ENCODE measurements at regions of chr3 and their contacts with region 1.

Region 1: GRCh38 chr3:113696658-113697499 is 437 bp upstream of the USF3 start:
- DNase-seq: peak; percentile 99
- ATAC-seq: peak; percentile 82
- H3K4me3 ChIP-seq: peak overlapping the region; percentile 73
- H3K27ac ChIP-seq: no peak overlapping the region
- H3K4me1 ChIP-seq: peaks cover 14% of the 10 kb centered on the region
- H3K27me3 ChIP-seq: no peaks in the 10 kb centered on the region
- CTCF ChIP-seq: no peak

Region 2: GRCh38 chr3:113231827-113232253 is 465.0 kb before region 1 on chr3:
- CTCF ChIA-PET with region 1: no interaction called
- POLR2A ChIA-PET with region 1: no interaction called
- intact Hi-C with region 1: loop called (anchors 5 kb)
- DNase-seq: peak; percentile 95
- ATAC-seq: peak; percentile 99
- H3K4me3 ChIP-seq: no peak overlapping the region
- H3K27ac ChIP-seq: peak overlapping the region; percentile 93
- H3K4me1 ChIP-seq: peaks cover 26% of the 10 kb centered on the region
- H3K27me3 ChIP-seq: no peaks in the 10 kb centered on the region
- CTCF ChIP-seq: no peak

Region 3: GRCh38 chr3:113275929-113276750 is 420.7 kb before region 1 on chr3:
- CTCF ChIA-PET with region 1: no interaction called
- POLR2A ChIA-PET with region 1: no interaction called
- intact Hi-C with region 1: loop called (anchors 2 kb)
- DNase-seq: peak; percentile 55
- ATAC-seq: peak; percentile 89
- H3K4me3 ChIP-seq: no peak overlapping the region
- H3K27ac ChIP-seq: no peak overlapping the region
- H3K4me1 ChIP-seq: peaks cover 10% of the 10 kb centered on the region; the same call in 1 of the 2 replicates
- H3K27me3 ChIP-seq: no peaks in the 10 kb centered on the region
- CTCF ChIP-seq: peak; percentile 43; the same call in 1 of the 2 replicates

Region 4: DNA sequence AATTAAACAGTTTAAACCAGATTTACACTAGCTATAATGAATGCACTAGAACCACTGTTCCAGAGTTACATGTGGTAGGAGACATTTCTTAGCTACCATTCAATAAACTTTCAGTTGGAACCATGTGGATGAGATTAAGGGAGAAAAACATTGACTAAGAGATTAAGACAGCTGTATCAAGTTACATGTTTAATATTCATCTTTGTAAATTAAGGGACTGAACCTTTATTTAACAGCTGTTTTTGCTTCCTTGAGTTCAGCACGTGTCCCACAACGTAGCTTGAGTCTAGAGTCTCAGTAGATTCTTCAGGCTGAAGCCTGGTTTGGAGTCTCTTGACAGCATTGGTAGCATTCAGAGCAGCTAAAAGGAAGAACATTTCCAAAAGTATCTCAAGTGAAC is 228.3 kb before region 1 on chr3:
- CTCF ChIA-PET with region 1: no interaction called
- POLR2A ChIA-PET with region 1: no interaction called
- intact Hi-C with region 1: no loop called
- DNase-seq: no peak
- ATAC-seq: no peak
- H3K4me3 ChIP-seq: no peak overlapping the region
- H3K27ac ChIP-seq: no peak overlapping the region
- H3K4me1 ChIP-seq: no peaks in the 10 kb centered on the region
- H3K27me3 ChIP-seq: no peaks in the 10 kb centered on the region
- CTCF ChIP-seq: no peak

Region 5: DNA sequence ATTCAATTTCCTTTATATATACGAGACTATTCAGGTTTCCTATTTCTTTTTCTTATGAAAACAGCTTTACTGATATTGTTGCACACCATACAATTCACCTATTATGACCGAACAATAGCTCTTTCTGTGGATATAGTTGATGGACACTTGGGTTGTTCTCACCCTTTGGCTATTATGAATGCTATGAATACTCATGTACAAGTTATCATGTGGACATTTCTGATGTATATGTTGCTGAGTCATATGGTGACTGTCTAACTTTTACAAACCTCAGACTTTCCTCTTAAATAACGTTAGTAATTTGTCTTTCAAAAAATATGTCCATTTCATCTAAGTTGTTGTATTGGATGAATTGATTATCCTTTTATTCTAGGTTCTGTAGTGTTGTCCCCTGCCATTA is 15.2 kb after region 1 on chr3:
- CTCF ChIA-PET with region 1: no interaction called
- POLR2A ChIA-PET with region 1: interaction called, 15 read pairs
- intact Hi-C with region 1: no loop called
- DNase-seq: peak; percentile 65
- ATAC-seq: peak; percentile 83
- H3K4me3 ChIP-seq: no peak overlapping the region
- H3K27ac ChIP-seq: peak overlapping the region; percentile 50
- H3K4me1 ChIP-seq: peaks cover 11% of the 10 kb centered on the region; the same call in 1 of the 2 replicates
- H3K27me3 ChIP-seq: no peaks in the 10 kb centered on the region
- CTCF ChIP-seq: no peak

Region 6: GRCh38 chr3:113802795-113803455 is 106.0 kb after region 1 on chr3:
- CTCF ChIA-PET with region 1: no interaction called
- POLR2A ChIA-PET with region 1: no interaction called
- intact Hi-C with region 1: no loop called
- DNase-seq: no peak
- ATAC-seq: no peak
- H3K4me3 ChIP-seq: no peak overlapping the region
- H3K27ac ChIP-seq: no peak overlapping the region
- H3K4me1 ChIP-seq: no peaks in the 10 kb centered on the region
- H3K27me3 ChIP-seq: no peaks in the 10 kb centered on the region
- CTCF ChIP-seq: no peak